PC-9 (cell line): ENCODE measurements at regions of chr13 and their contacts with region 1.

Region 1: DNA sequence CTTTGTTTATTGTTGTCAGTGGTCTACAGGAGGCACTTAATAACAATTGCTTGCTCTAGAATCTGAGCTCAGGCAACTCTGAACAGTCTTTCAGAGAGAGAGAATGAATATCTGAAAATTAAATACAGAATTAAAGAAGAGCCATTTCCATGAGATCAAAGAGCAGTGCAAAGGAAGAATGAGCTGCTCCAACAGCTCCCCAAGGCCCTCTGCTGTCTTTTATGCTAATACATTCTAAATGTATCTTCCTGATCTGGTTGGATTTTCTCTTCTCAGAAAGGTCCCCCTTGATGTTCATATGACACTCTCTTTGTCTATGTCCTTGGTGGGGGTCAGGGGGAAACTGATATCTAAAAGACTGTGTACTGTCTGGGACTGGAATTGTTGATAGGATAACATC is 1029.6 kb downstream of the PCDH9 start:
- DNase-seq: no peak
- H3K4me3 ChIP-seq: no peak overlapping the region
- H3K27ac ChIP-seq: no peak overlapping the region
- H3K4me1 ChIP-seq: no peaks in the 10 kb centered on the region
- H3K27me3 ChIP-seq: no peaks in the 10 kb centered on the region
- CTCF ChIP-seq: no peak

Region 2: DNA sequence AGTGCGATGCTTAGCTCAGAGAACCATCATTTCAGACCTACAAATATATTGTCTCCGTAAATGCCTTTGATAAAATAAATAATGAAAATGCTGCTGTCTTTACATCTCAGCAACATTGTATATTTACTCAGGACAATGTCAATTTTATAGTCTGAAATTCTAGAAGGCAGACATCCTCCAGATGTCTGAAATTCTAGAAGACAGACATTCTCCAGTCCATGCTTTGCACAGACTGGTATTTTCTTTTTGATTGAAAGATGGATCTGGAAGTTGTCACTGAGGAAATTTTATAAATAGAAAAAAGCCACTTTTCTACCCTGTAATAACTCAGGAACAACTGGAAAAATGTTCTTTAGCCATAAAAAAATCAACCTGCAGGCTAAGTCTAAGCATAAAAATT is 1263.7 kb before region 1 on chr13:
- CTCF ChIA-PET with region 1: no interaction called
- POLR2A ChIA-PET with region 1: interaction called, 13 read pairs
- intact Hi-C with region 1: no loop called
- DNase-seq: no peak
- H3K4me3 ChIP-seq: no peak overlapping the region
- H3K27ac ChIP-seq: no peak overlapping the region
- H3K4me1 ChIP-seq: no peaks in the 10 kb centered on the region
- H3K27me3 ChIP-seq: no peaks in the 10 kb centered on the region
- CTCF ChIP-seq: no peak

Region 3: GRCh38 chr13:66492479-66492878 is 291.9 kb after region 1 on chr13:
- CTCF ChIA-PET with region 1: no interaction called
- POLR2A ChIA-PET with region 1: no interaction called
- intact Hi-C with region 1: no loop called
- DNase-seq: peak in 1 of 2 experiments; percentile 4
- H3K4me3 ChIP-seq: no peak overlapping the region
- H3K27ac ChIP-seq: no peak overlapping the region
- H3K4me1 ChIP-seq: no peaks in the 10 kb centered on the region
- H3K27me3 ChIP-seq: no peaks in the 10 kb centered on the region
- CTCF ChIP-seq: 0 out of 2 replicates have a peak, but pooled peaks have one; percentile 22